Kidney (tissue), 22 donors: ENCODE measurements at regions of chr20 and their contacts with region 1.

Region 1: GRCh38 chr20:36214684-36215256 is 21.5 kb upstream of the AAR2 start:
- DNase-seq: peak in 2 of 5 donors; percentile 12 to 40
- H3K4me3 ChIP-seq: no peak overlapping the region
- H3K27ac ChIP-seq: no peak overlapping the region
- H3K4me1 ChIP-seq: peaks cover 0 to 2% (median 0%) of the 10 kb centered on the region in 3 donors
- H3K27me3 ChIP-seq: no peaks in the 10 kb centered on the region
- CTCF ChIP-seq: peak; percentile 16

Region 2: GRCh38 chr20:36439040-36439730 is 224.4 kb after region 1 on chr20:
- intact Hi-C with region 1: loop called (anchors 10 kb)
- DNase-seq: peak; percentile 74 to 84 (median 81)
- H3K4me3 ChIP-seq: no peak overlapping the region
- H3K27ac ChIP-seq: no peak overlapping the region
- H3K4me1 ChIP-seq: no peaks in the 10 kb centered on the region
- H3K27me3 ChIP-seq: no peaks in the 10 kb centered on the region
- CTCF ChIP-seq: peak; percentile 87